ENCODE measurements at regions of chr6 and their contacts with region 1.

Region 1: GRCh38 chr6:131909408-131910218 is 41.6 kb downstream of the CCN2 start:
- DNase-seq: peak; percentile 51 to 77 (median 71)
- ATAC-seq: peak; percentile 93
- H3K4me3 ChIP-seq: no peak overlapping the region
- H3K4me3 Mint-ChIP-seq: no peak overlapping the region
- H3K27ac ChIP-seq: no peak overlapping the region
- H3K27ac Mint-ChIP-seq: no peak overlapping the region
- H3K4me1 ChIP-seq: peaks cover 6% of the 10 kb centered on the region
- H3K4me1 Mint-ChIP-seq: peaks cover 7% of the 10 kb centered on the region
- H3K27me3 ChIP-seq: peaks cover 0 to 10% of the 10 kb centered on the region in 2 experiments
- H3K27me3 Mint-ChIP-seq: peaks cover 23% of the 10 kb centered on the region
- CTCF ChIP-seq: peak; percentile 82

Region 2: GRCh38 chr6:131694831-131695426 is 214.7 kb before region 1 on chr6:
- CTCF ChIA-PET with region 1: interaction called, 9 read pairs
- POLR2A ChIA-PET with region 1: no interaction called
- intact Hi-C with region 1: loop called (anchors 5 to 10 kb)
- DNase-seq: peak in 2 of 9 experiments; percentile 20 to 34
- ATAC-seq: no peak
- H3K4me3 ChIP-seq: no peak overlapping the region
- H3K4me3 Mint-ChIP-seq: no peak overlapping the region
- H3K27ac ChIP-seq: no peak overlapping the region
- H3K27ac Mint-ChIP-seq: no peak overlapping the region
- H3K4me1 ChIP-seq: no peaks in the 10 kb centered on the region
- H3K4me1 Mint-ChIP-seq: no peaks in the 10 kb centered on the region
- H3K27me3 ChIP-seq: no peaks in the 10 kb centered on the region
- H3K27me3 Mint-ChIP-seq: no peaks in the 10 kb centered on the region
- CTCF ChIP-seq: peak; percentile 24

Region 3: DNA sequence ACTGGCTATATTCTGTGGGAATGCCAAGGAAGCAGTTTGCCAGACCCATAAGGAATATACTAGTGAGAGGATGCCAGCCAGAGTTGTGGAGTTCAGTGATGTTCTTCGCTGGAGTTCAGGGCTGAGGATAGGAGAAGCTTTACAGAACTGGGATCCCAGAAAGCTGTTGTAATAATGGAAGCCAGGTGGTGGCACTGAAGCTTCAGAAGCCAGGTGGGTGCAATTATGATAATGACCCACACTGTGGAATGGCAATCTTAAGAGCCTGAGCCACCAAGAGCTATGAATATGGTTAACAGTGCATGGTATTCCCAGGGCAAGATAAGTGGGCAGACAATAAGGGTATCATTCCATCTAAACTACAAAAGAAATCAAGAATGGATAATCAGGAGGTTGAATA is 126.8 kb before region 1 on chr6:
- CTCF ChIA-PET with region 1: interaction called, 8 read pairs
- POLR2A ChIA-PET with region 1: no interaction called
- intact Hi-C with region 1: loop called in 1 of 2 experiments (anchors 2 kb)
- DNase-seq: peak in 2 of 9 experiments; percentile 10
- ATAC-seq: no peak
- H3K4me3 ChIP-seq: no peak overlapping the region
- H3K4me3 Mint-ChIP-seq: no peak overlapping the region
- H3K27ac ChIP-seq: no peak overlapping the region
- H3K27ac Mint-ChIP-seq: no peak overlapping the region
- H3K4me1 ChIP-seq: no peaks in the 10 kb centered on the region
- H3K4me1 Mint-ChIP-seq: no peaks in the 10 kb centered on the region
- H3K27me3 ChIP-seq: no peaks in the 10 kb centered on the region
- H3K27me3 Mint-ChIP-seq: peaks cover 24% of the 10 kb centered on the region
- CTCF ChIP-seq: no peak

Region 4: GRCh38 chr6:132218059-132218696 is 308.6 kb after region 1 on chr6:
- CTCF ChIA-PET with region 1: no interaction called
- POLR2A ChIA-PET with region 1: no interaction called
- intact Hi-C with region 1: loop called (anchors 10 kb)
- DNase-seq: no peak
- ATAC-seq: no peak
- H3K4me3 ChIP-seq: no peak overlapping the region
- H3K4me3 Mint-ChIP-seq: no peak overlapping the region
- H3K27ac ChIP-seq: no peak overlapping the region
- H3K27ac Mint-ChIP-seq: no peak overlapping the region
- H3K4me1 ChIP-seq: no peaks in the 10 kb centered on the region
- H3K4me1 Mint-ChIP-seq: no peaks in the 10 kb centered on the region
- H3K27me3 ChIP-seq: no peaks in the 10 kb centered on the region
- H3K27me3 Mint-ChIP-seq: peaks cover 3% of the 10 kb centered on the region
- CTCF ChIP-seq: no peak

Region 5: DNA sequence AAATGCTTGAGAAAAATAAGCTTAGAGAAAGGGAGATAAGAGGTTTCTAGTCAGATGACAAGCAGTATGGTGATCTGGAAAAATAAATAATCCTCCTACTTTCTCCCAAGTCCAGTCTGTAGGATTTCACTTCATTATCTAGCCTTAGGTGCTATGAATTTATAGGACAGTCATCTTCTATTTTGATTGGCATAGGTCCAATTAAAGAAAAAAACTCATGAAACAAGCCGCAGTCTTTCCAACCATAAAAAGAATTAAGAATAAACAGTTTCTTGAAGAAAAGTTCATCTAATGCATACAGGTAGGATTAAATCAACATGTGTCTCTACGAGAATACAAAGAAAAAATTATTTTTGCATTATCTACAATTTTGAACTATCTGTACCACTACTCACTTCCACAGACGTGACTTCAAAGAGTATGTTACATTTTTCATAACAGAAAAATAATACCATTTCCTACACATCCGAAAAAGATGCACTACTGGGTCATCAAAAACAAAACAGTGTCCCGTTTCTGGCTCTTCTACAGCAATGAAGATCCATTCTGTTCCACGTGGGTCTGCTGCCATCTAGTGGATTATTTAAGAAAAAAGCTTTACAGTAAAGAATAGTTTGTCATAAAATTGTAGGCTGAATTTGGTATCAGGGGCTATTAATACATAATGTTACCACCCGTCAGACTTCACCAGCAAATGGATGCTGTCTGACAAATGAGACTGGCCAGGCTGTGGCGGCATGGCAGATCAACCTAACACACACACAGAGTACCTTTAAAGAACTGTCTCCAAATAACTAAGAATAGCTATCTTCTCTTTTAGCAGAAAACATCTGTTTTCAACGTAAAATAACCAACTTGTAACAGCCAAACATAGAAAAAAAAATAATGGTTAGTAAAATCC is 574.4 kb after region 1 on chr6:
- CTCF ChIA-PET with region 1: no interaction called
- POLR2A ChIA-PET with region 1: no interaction called
- intact Hi-C with region 1: loop called in 1 of 2 experiments (anchors 10 kb)
- DNase-seq: peak in 6 of 9 experiments; percentile 12 to 78 (median 44)
- ATAC-seq: peak; percentile 71
- H3K4me3 ChIP-seq: no peak overlapping the region
- H3K4me3 Mint-ChIP-seq: no peak overlapping the region
- H3K27ac ChIP-seq: no peak overlapping the region
- H3K27ac Mint-ChIP-seq: no peak overlapping the region
- H3K4me1 ChIP-seq: no peaks in the 10 kb centered on the region
- H3K4me1 Mint-ChIP-seq: peaks cover 11% of the 10 kb centered on the region
- H3K27me3 ChIP-seq: no peaks in the 10 kb centered on the region
- H3K27me3 Mint-ChIP-seq: no peaks in the 10 kb centered on the region
- CTCF ChIP-seq: peak; percentile 90

Measured in CD8-positive, alpha-beta T cell (primary cell).